ENCODE measurements at regions of chr1 and their contacts with region 1.

Region 1: DNA sequence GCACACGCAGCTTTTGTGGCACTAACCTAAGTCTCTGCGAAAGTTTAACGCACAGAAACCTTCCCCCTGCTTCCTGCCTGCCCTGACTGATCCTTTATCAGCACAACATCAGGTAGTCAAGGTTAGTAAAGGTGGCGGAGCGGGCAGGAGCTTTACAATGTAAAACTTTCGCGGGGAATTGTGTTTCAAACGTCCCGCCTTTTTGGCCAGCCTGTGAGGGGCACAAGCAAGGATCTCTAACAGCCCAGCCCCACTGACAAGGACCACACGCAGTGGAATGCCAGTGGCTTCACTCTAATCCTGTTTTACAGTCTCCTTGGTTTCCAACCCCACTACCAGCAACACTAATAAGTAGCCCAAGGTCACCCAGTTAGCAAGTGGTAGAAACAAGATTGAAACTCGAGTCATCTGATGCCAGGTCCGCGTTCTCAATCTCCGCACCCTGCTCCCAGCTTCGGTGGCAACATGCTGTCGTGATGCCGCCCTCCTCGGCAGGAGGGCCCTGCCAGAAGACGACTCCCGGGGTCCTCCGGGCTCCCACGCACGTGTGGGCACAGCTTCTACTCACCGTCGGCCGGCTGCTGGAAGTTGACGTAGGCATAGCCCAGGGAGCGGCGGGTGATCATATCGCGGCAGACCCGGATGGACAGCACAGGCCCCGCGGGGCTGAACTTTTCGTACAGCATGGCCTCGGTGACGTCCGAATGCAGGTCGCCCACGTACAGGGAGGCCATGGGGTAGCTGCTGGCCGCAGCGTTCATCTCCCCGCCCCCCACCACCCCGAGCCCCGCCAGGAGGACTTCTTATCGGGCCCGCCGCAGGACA is 1.2 kb downstream of the PABPC4 start:
- DNase-seq: peak; percentile 57 to 72 (median 64)
- H3K4me3 ChIP-seq: peak overlapping the region; percentile 31 to 87
- H3K4me3 Mint-ChIP-seq: peak overlapping the region; percentile 90 to 99 (median 92)
- H3K27ac ChIP-seq: peak overlapping the region; percentile 76
- H3K27ac Mint-ChIP-seq: peak overlapping the region; percentile 95 to 98 (median 96)
- H3K4me1 ChIP-seq: peaks cover 38% of the 10 kb centered on the region
- H3K4me1 Mint-ChIP-seq: peaks cover 29 to 45% (median 36%) of the 10 kb centered on the region in 4 donors
- H3K27me3 ChIP-seq: no peaks in the 10 kb centered on the region
- H3K27me3 Mint-ChIP-seq: no peaks in the 10 kb centered on the region

Region 2: DNA sequence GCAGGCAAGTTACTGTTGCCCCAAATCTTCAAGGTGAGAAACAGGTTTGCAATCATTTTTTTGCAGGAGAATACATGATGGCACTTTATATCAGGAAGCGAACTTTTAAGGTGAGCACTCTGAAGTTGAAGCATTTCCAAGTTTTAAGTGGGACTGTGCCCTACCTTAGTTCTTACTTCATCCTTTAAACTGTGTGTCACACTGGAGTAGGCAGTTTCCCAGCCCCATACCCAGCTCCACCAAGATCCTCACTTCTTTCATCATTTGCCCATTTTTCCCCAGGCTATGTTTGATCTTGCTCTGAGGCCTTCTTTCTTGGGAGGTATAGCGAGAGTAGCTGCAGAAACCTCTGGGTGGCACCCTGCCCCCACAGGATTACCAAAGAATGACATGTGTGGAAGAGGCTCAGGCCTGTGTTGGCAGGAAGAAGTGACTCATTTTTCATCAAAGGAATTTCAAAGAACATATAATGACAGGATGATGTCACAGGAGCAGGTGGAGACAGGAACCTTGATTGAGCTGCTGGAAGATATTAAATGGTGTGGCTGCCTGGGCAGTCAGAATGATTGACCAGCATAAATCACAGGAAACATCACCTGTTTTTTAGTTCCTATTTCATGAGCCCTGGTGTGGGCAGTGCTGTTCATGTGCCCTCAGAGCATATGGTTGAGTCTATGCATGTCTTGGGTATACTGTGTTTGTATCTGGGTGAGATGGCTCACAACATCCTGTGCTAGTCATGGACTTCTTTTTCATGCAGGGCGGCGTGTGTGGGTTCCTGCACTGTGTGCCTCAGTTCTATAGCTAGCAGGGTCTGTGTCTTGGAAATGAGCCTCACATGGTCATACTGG is 391.7 kb before region 1 on chr1:
- CTCF ChIA-PET with region 1: no interaction called
- POLR2A ChIA-PET with region 1: no interaction called
- intact Hi-C with region 1: loop called (anchors 5 kb)
- DNase-seq: peak; percentile 83 to 95 (median 87)
- H3K4me3 ChIP-seq: no peak overlapping the region
- H3K4me3 Mint-ChIP-seq: peak overlapping the region in 5 of 8 donors; percentile 8 to 53 (median 35)
- H3K27ac ChIP-seq: peak overlapping the region; percentile 70
- H3K27ac Mint-ChIP-seq: peak overlapping the region; percentile 90 to 98 (median 96)
- H3K4me1 ChIP-seq: peaks cover 34% of the 10 kb centered on the region
- H3K4me1 Mint-ChIP-seq: peaks cover 18 to 44% (median 30%) of the 10 kb centered on the region in 4 donors
- H3K27me3 ChIP-seq: no peaks in the 10 kb centered on the region
- H3K27me3 Mint-ChIP-seq: no peaks in the 10 kb centered on the region

Region 3: GRCh38 chr1:39431927-39432326 is 143.5 kb before region 1 on chr1:
- CTCF ChIA-PET with region 1: no interaction called
- POLR2A ChIA-PET with region 1: no interaction called
- intact Hi-C with region 1: no loop called
- DNase-seq: no peak
- H3K4me3 ChIP-seq: no peak overlapping the region
- H3K4me3 Mint-ChIP-seq: no peak overlapping the region
- H3K27ac ChIP-seq: no peak overlapping the region
- H3K27ac Mint-ChIP-seq: peak overlapping the region in 5 of 7 donors; percentile 3 to 77 (median 6)
- H3K4me1 ChIP-seq: no peaks in the 10 kb centered on the region
- H3K4me1 Mint-ChIP-seq: peaks cover 0 to 1% (median under 1%) of the 10 kb centered on the region in 4 donors
- H3K27me3 ChIP-seq: no peaks in the 10 kb centered on the region
- H3K27me3 Mint-ChIP-seq: no peaks in the 10 kb centered on the region

Region 4: GRCh38 chr1:39469150-39469549 is 106.3 kb before region 1 on chr1:
- CTCF ChIA-PET with region 1: no interaction called
- POLR2A ChIA-PET with region 1: no interaction called
- intact Hi-C with region 1: no loop called
- DNase-seq: no peak
- H3K4me3 ChIP-seq: no peak overlapping the region
- H3K4me3 Mint-ChIP-seq: no peak overlapping the region
- H3K27ac ChIP-seq: no peak overlapping the region
- H3K27ac Mint-ChIP-seq: peak overlapping the region in 6 of 7 donors; percentile 8 to 95 (median 36)
- H3K4me1 ChIP-seq: no peaks in the 10 kb centered on the region
- H3K4me1 Mint-ChIP-seq: peaks cover 0 to 4% (median 2%) of the 10 kb centered on the region in 4 donors
- H3K27me3 ChIP-seq: no peaks in the 10 kb centered on the region
- H3K27me3 Mint-ChIP-seq: no peaks in the 10 kb centered on the region

Region 5: GRCh38 chr1:39564340-39564739 is 11.1 kb before region 1 on chr1:
- CTCF ChIA-PET with region 1: interaction called, 5 read pairs
- POLR2A ChIA-PET with region 1: interaction called, 40 read pairs
- intact Hi-C with region 1: loop called (anchors 2 kb)
- DNase-seq: no peak
- H3K4me3 ChIP-seq: no peak overlapping the region
- H3K4me3 Mint-ChIP-seq: no peak overlapping the region
- H3K27ac ChIP-seq: no peak overlapping the region
- H3K27ac Mint-ChIP-seq: no peak overlapping the region
- H3K4me1 ChIP-seq: peaks cover 9% of the 10 kb centered on the region
- H3K4me1 Mint-ChIP-seq: peaks cover 2 to 11% (median 9%) of the 10 kb centered on the region in 4 donors
- H3K27me3 ChIP-seq: no peaks in the 10 kb centered on the region
- H3K27me3 Mint-ChIP-seq: no peaks in the 10 kb centered on the region

Region 6: GRCh38 chr1:39691262-39692151 is 116.1 kb after region 1 on chr1 and contains the start of gene HPCAL4:
- CTCF ChIA-PET with region 1: interaction called, 4 read pairs
- POLR2A ChIA-PET with region 1: interaction called, 16 read pairs
- intact Hi-C with region 1: no loop called
- DNase-seq: peak; percentile 91 to 95 (median 93)
- H3K4me3 ChIP-seq: peak within 1 kb of the TSS; percentile 69 to 88
- H3K4me3 Mint-ChIP-seq: peak within 1 kb of the TSS; percentile 83 to 95 (median 87)
- H3K27ac ChIP-seq: peak within 1 kb of the TSS; percentile 65
- H3K27ac Mint-ChIP-seq: peak within 1 kb of the TSS; percentile 88 to 95 (median 92)
- H3K4me1 ChIP-seq: peaks cover 46% of the 10 kb centered on the region
- H3K4me1 Mint-ChIP-seq: peaks cover 19 to 48% (median 39%) of the 10 kb centered on the region in 4 donors
- H3K27me3 ChIP-seq: no peaks in the 10 kb centered on the region
- H3K27me3 Mint-ChIP-seq: no peaks in the 10 kb centered on the region
- total RNA-seq, gene HPCAL4: 31.8 to 32.4 TPM

Region 7: GRCh38 chr1:39738622-39739366 is 163.4 kb after region 1 on chr1 and contains the start of gene PPIE:
- CTCF ChIA-PET with region 1: no interaction called
- POLR2A ChIA-PET with region 1: interaction called, 22 read pairs
- intact Hi-C with region 1: no loop called
- DNase-seq: peak; percentile 83 to 90 (median 85)
- H3K4me3 ChIP-seq: peak within 1 kb of the TSS; percentile 89 to 97
- H3K4me3 Mint-ChIP-seq: peak within 1 kb of the TSS; percentile 96 to 99 (median 98)
- H3K27ac ChIP-seq: peak within 1 kb of the TSS; percentile 65
- H3K27ac Mint-ChIP-seq: peak within 1 kb of the TSS; percentile 87 to 99 (median 98)
- H3K4me1 ChIP-seq: peaks cover 22% of the 10 kb centered on the region
- H3K4me1 Mint-ChIP-seq: peaks cover 20 to 41% (median 29%) of the 10 kb centered on the region in 4 donors
- H3K27me3 ChIP-seq: no peaks in the 10 kb centered on the region
- H3K27me3 Mint-ChIP-seq: peaks cover 6 to 20% of the 10 kb centered on the region in 2 donors
- total RNA-seq, gene PPIE: 67.7 to 69.4 TPM

Region 8: GRCh38 chr1:40979233-40980067 is 1404.0 kb after region 1 on chr1 and contains the start of gene CTPS1:
- CTCF ChIA-PET with region 1: no interaction called
- POLR2A ChIA-PET with region 1: no interaction called
- intact Hi-C with region 1: loop called (anchors 5 kb)
- DNase-seq: peak; percentile 94 to 96 (median 95)
- H3K4me3 ChIP-seq: peak within 1 kb of the TSS; percentile 45 to 80
- H3K4me3 Mint-ChIP-seq: peak within 1 kb of the TSS; percentile 83 to 97 (median 90)
- H3K27ac ChIP-seq: peak within 1 kb of the TSS; percentile 81
- H3K27ac Mint-ChIP-seq: peak within 1 kb of the TSS; percentile 88 to 98 (median 92)
- H3K4me1 ChIP-seq: peaks cover 25% of the 10 kb centered on the region
- H3K4me1 Mint-ChIP-seq: peaks cover 17 to 31% (median 22%) of the 10 kb centered on the region in 4 donors
- H3K27me3 ChIP-seq: no peaks in the 10 kb centered on the region
- H3K27me3 Mint-ChIP-seq: no peaks in the 10 kb centered on the region
- total RNA-seq, gene CTPS1: 18.5 to 19.7 TPM

Measured in CD4-positive, alpha-beta memory T cell (primary cell).